Heart right ventricle (tissue), 16 donors: ENCODE measurements at regions of chr4 and their contacts with region 1.

Region 1: DNA sequence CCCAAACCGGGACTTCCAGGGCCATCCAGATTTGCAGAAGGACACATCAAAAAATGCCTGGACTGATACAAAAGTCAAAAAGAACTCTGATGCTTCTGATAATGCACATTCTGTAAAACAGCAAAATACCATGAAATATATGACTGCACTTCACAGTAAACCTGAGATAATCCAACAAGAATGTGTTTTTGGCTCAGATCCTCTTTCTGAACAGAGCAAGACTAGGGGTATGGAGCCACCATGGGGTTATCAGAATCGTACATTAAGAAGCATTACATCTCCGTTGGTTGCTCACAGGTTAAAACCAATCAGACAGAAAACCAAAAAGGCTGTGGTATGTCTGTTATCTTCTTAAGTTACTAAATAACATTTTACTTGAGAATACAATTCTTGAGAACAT is 9.2 kb downstream of the PLK4 start:
- DNase-seq: no peak
- ATAC-seq: no peak
- H3K4me3 ChIP-seq: no peak overlapping the region
- H3K27ac ChIP-seq: no peak overlapping the region
- H3K4me1 ChIP-seq: no peaks in the 10 kb centered on the region
- H3K27me3 ChIP-seq: no peaks in the 10 kb centered on the region
- CTCF ChIP-seq: no peak

Region 2: DNA sequence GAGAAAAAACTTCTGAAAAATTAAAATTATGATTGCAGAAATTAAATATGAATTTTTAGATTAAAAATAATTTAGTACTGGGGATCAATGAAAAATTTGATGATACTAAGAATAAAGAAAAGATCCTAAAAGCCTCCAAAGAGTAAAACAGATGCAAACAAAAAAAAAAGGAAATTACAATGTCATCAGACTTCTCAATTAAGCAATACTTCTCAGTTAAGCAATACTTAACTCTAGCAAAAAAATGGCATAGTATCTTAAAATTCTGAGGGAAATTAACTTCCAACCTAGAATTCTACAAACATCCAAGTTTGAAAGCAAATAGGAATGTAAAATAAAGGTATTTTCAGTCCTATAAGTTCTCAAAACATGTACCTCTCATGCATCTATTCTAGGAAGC is 398.3 kb before region 1 on chr4:
- intact Hi-C with region 1: no loop called
- DNase-seq: no peak
- ATAC-seq: no peak
- H3K4me3 ChIP-seq: no peak overlapping the region
- H3K27ac ChIP-seq: no peak overlapping the region
- H3K4me1 ChIP-seq: no peaks in the 10 kb centered on the region
- H3K27me3 ChIP-seq: no peaks in the 10 kb centered on the region
- CTCF ChIP-seq: no peak

Region 3: DNA sequence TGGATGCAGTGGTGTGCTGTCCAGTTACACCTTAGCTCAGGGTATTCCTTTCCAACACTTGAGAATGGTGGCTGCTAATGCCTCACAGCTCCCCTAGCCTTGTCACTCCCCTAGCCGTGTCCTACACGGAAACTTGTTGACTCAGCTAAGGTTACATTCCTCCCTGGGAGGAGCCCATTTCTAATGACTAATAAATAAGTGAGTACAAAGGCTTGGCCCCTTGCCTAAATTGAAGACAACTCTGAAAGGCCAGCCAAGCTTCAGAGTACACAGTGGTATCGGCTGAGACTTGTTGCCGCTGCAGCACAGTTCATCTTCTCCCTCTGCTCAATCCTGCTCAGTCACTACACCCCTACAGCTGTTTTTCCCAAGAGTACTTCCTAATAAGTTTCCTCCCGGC is 180.9 kb before region 1 on chr4:
- intact Hi-C with region 1: no loop called
- DNase-seq: peak in 1 of 2 donors; percentile 15
- ATAC-seq: peak in 7 of 8 donors; percentile 46 to 98 (median 81)
- H3K4me3 ChIP-seq: no peak overlapping the region
- H3K27ac ChIP-seq: no peak overlapping the region
- H3K4me1 ChIP-seq: peaks cover 0 to 8% (median 0%) of the 10 kb centered on the region in 9 donors
- H3K27me3 ChIP-seq: no peaks in the 10 kb centered on the region
- CTCF ChIP-seq: no peak

Region 4: GRCh38 chr4:127844601-127845116 is 45.2 kb before region 1 on chr4:
- intact Hi-C with region 1: loop called in 1 of 10 experiments (anchors 10 kb)
- DNase-seq: no peak
- ATAC-seq: no peak
- H3K4me3 ChIP-seq: no peak overlapping the region
- H3K27ac ChIP-seq: no peak overlapping the region
- H3K4me1 ChIP-seq: peaks cover 0 to 6% (median 0%) of the 10 kb centered on the region in 9 donors
- H3K27me3 ChIP-seq: no peaks in the 10 kb centered on the region
- CTCF ChIP-seq: no peak

Region 5: DNA sequence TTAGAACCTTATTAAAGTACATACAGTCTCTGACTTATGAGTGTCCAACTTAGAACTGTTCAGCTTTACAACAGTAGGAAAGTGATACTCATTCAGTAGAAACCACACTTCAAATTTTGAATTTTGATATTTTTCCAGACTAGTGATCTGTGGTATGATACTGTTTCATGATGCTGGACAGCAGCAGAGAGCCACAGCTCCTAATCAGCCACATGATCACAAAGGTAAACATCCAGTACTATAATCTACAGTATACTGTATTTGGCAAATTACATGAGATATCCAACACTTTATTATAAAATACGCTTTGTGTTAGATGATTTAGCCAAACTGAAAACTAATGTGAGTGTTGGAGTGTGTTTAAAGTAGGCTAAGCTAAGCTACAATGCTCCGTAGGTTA is 36.9 kb after region 1 on chr4:
- intact Hi-C with region 1: no loop called
- DNase-seq: no peak
- ATAC-seq: no peak
- H3K4me3 ChIP-seq: no peak overlapping the region
- H3K27ac ChIP-seq: no peak overlapping the region
- H3K4me1 ChIP-seq: no peaks in the 10 kb centered on the region
- H3K27me3 ChIP-seq: no peaks in the 10 kb centered on the region
- CTCF ChIP-seq: no peak